Adrenal gland (tissue), 19 donors: ENCODE measurements at regions of chr6 and their contacts with region 1.

Region 1: DNA sequence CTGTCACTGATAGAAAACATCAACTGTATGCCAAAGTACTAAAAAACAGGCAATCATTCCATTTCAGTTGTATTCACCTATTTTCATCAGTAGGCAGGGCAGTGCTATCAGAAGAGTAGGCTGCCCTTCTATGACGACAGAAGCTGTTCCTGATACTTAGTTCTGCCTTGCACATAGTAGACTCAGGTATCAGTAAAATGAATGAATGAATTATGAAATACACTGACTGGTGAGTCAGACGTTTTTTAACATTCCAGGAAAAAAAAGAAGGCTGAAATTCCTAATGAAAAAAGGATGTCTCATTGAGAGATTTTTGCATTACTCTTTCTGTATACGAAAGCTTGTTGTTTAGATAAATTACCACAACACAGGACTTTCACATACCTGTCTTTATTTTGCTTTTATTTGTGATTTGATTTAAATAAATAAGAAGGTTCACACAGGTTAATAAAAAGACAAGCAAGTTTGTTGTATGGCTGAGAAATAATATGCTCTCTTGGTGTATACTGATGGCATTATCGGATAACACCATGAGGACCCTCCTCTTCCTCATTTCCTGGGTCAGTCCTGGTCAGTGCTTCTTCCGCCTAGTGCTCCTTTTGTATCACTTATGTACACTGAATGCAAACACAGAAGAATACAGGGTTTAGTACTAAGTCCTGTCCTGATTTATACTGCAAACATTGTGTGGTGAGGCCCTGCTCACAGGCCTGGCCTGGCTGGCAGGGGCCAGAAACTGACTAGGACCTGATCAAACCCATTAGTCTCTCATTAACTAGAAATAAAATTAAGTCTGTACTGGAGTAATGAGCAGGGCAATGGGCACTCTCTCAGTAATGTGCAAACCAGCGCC is 39.4 kb upstream of the SPDEF start:
- DNase-seq: no peak
- H3K4me3 ChIP-seq: no peak overlapping the region
- H3K27ac ChIP-seq: no peak overlapping the region
- H3K4me1 ChIP-seq: peaks cover 0 to 21% of the 10 kb centered on the region in 2 donors
- H3K27me3 ChIP-seq: no peaks in the 10 kb centered on the region
- CTCF ChIP-seq: no peak
- POLR2A ChIP-seq: no peak

Region 2: DNA sequence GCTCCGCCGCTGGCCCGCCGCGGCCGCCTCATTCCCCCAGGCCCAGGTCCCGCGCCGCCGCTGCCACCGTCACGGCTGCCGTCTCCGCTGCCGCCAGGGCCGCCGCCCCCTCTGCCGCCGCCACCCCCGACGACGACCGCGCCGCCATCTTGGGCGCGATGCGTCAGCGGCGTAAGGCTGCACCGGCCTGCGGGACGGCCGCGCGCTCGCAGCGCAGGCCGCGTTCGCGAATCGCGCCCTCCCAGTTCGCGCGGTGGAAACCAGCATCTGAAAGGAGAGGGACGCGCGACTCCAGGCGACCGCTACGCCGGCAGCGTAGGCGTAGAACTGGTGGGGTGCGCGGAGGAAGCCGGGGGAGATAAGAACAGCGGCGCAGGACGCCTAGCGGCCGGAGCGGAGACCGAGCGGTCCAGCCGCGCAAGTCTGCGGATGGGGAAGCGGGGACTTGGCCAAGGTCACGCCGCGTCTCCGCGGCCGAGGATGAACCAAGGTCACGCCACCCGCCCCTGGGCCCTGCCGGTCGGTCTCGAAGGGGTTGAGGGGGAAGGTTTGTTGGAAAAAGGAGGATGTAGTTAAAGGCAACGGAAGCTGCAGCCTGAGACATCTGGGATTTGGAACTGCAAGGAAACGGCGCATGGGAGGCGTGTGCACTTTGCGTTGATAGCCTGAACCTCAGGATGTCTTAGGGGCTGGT is 202.9 kb before region 1 on chr6 and contains the start of gene NUDT3:
- intact Hi-C with region 1: no loop called
- DNase-seq: peak; percentile 92 to 97 (median 95)
- H3K4me3 ChIP-seq: peak within 1 kb of the TSS; percentile 75 to 97 (median 84)
- H3K27ac ChIP-seq: peak within 1 kb of the TSS; percentile 80 to 99 (median 98)
- H3K4me1 ChIP-seq: peaks cover 0 to 37% of the 10 kb centered on the region in 2 donors
- H3K27me3 ChIP-seq: no peaks in the 10 kb centered on the region
- CTCF ChIP-seq: peak; percentile 67 to 95 (median 91)
- POLR2A ChIP-seq: peak; percentile 69 to 77
- total RNA-seq, gene NUDT3: 34.3 to 56.3 (median 45.2) TPM

Region 3: DNA sequence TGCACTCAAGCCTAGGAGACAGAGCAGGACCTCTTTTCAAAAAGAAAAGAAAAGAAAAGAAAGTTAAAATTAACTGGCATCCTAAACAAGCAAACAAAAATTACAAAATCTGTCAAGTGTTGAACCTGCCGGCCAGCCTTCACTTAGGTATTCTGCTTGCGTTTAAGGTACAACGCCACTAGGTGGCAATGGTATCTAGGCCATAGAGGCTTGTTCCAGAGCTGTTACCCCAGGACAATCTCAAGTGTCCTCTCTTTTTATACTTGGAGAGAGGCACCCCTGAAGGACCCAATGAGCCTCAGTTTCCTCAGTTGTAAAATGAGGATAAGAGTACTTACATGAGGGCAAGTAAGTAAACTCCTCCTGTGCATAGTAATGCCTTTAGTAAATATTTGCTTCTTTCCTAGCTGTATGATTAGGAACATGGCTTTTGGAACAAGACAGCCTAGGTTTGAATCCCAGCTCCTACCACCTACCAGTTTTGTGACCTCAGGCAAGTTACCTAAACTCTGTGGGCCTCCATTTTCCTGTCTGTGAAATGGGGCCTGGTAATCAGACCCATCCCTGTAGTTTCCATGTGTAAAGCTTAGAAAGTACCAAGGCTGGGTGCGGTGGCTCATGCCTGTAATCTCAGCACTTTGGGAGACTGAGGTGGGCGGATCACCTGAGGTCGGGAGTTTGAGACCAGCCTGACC is 135.5 kb before region 1 on chr6:
- intact Hi-C with region 1: loop called (anchors 10 kb)
- DNase-seq: peak; percentile 38 to 73 (median 54)
- H3K4me3 ChIP-seq: no peak overlapping the region
- H3K27ac ChIP-seq: peak overlapping the region in 1 of 5 donors; percentile 85
- H3K4me1 ChIP-seq: peaks cover 0 to 9% of the 10 kb centered on the region in 2 donors
- H3K27me3 ChIP-seq: no peaks in the 10 kb centered on the region
- CTCF ChIP-seq: peak; percentile 51 to 67 (median 66)
- POLR2A ChIP-seq: no peak